ENCODE measurements at regions of chr16 and their contacts with region 1.

Region 1: GRCh38 chr16:27318392-27319226 is 4.8 kb downstream of the IL4R start:
- DNase-seq: peak; percentile 79
- H3K4me3 Mint-ChIP-seq: peak overlapping the region; percentile 94
- H3K27ac Mint-ChIP-seq: peak overlapping the region; percentile 96
- H3K4me1 Mint-ChIP-seq: peaks cover 76% of the 10 kb centered on the region
- H3K27me3 Mint-ChIP-seq: no peaks in the 10 kb centered on the region

Region 2: DNA sequence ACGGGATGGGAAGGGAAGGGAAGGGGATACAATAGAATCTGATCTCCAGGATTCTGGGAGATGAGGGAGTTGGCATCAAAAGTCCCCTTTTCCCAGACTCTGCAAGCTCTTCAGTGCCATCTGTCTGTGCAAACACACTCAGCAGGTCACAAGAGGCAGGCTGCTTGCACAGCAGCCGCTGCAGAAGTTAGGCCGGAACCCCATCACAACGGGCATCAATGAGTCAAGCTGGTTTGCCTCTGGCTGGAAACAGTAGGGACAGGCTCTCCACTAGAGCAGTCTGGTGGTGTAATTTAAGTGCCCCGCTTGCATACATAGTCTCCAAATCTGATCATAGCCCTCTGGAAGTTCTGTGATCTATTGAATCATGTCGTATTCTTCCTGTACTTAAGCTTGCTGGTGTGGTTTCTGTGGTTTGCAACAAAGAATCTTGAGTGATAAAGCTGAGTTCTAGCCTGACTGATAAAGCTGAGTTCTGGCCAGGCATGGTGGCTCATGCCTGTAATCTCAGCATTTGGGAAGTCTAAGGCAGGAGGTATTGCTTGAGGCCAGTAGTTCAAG is 149.0 kb before region 1 on chr16:
- CTCF ChIA-PET with region 1: no interaction called
- POLR2A ChIA-PET with region 1: interaction called, 9 read pairs
- intact Hi-C with region 1: loop called (anchors 2 kb)
- DNase-seq: peak; percentile 90
- H3K4me3 Mint-ChIP-seq: peak overlapping the region; percentile 9
- H3K27ac Mint-ChIP-seq: peak overlapping the region; percentile 79
- H3K4me1 Mint-ChIP-seq: peaks cover 57% of the 10 kb centered on the region
- H3K27me3 Mint-ChIP-seq: no peaks in the 10 kb centered on the region

Region 3: GRCh38 chr16:27242868-27243590 is 75.6 kb before region 1 on chr16:
- CTCF ChIA-PET with region 1: interaction called, 3 read pairs
- POLR2A ChIA-PET with region 1: interaction called, 123 read pairs
- intact Hi-C with region 1: loop called (anchors 1 kb)
- DNase-seq: peak; percentile 23
- H3K4me3 Mint-ChIP-seq: no peak overlapping the region
- H3K27ac Mint-ChIP-seq: no peak overlapping the region
- H3K4me1 Mint-ChIP-seq: peaks cover 80% of the 10 kb centered on the region
- H3K27me3 Mint-ChIP-seq: no peaks in the 10 kb centered on the region

Region 4: DNA sequence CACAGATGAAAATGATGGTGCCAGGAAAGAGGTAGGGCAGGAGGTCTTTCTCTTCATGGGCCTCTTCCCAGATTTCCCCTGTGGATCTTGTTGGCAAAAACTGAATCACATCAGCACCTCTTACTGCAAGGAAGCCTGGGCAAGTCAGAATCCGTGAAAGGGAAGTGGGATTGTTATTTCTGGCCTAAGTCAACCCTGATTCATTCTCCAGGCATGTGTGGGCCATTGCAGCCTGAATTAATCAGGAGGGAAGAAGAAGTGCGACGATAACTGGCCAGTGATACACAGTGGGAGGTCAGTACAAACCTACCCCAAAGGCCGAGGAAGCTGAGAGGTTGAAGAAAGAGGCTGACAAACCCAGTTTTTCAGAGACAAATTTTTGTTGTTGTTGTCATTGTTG is 32.2 kb before region 1 on chr16:
- CTCF ChIA-PET with region 1: no interaction called
- POLR2A ChIA-PET with region 1: interaction called, 10 read pairs
- intact Hi-C with region 1: loop called (anchors 1 kb)
- DNase-seq: peak; percentile 4
- H3K4me3 Mint-ChIP-seq: no peak overlapping the region
- H3K27ac Mint-ChIP-seq: no peak overlapping the region
- H3K4me1 Mint-ChIP-seq: peaks cover 74% of the 10 kb centered on the region
- H3K27me3 Mint-ChIP-seq: peaks cover 3% of the 10 kb centered on the region

Region 5: DNA sequence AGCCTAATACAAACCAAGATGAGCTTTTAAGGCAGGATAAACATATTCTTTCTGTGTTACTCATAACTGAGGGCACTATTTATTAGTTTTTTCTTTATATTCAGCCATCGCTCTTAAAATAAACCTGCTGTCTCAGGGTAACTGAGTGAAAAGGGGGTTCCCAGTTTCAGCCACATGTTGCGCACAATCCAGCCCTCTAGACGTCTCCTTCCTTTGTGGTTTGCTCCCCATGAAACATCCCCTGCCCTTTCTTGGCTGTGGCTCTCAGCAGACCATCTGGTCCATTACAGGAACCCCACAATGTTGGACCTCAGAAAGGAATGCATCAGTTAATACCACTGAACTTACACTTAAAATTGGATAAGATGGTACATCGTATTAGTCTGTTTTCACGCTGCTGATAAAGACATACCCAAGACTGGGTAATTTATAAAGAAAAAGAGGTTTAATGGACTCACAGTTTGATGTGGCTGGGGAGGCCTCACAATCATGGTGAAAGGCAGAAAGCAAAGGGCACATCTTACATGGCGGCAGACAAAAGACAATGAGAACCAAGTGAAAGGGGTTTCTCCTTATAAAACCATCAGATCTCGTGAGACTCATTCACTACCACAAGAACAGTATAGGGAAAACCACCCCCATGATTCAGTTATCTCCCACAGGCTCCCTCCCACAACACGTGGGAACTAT is 70.8 kb after region 1 on chr16:
- CTCF ChIA-PET with region 1: no interaction called
- POLR2A ChIA-PET with region 1: no interaction called
- intact Hi-C with region 1: no loop called
- DNase-seq: no peak
- H3K4me3 Mint-ChIP-seq: no peak overlapping the region
- H3K27ac Mint-ChIP-seq: no peak overlapping the region
- H3K4me1 Mint-ChIP-seq: peaks cover 19% of the 10 kb centered on the region
- H3K27me3 Mint-ChIP-seq: no peaks in the 10 kb centered on the region

Region 6: GRCh38 chr16:27401768-27402568 is 83.4 kb after region 1 on chr16 and contains the start of gene IL21R:
- CTCF ChIA-PET with region 1: no interaction called
- POLR2A ChIA-PET with region 1: interaction called, 35 read pairs
- intact Hi-C with region 1: loop called (anchors 2 kb)
- DNase-seq: peak; percentile 93
- H3K4me3 Mint-ChIP-seq: peak within 1 kb of the TSS; percentile 100
- H3K27ac Mint-ChIP-seq: peak within 1 kb of the TSS; percentile 96
- H3K4me1 Mint-ChIP-seq: peaks cover 43% of the 10 kb centered on the region
- H3K27me3 Mint-ChIP-seq: no peaks in the 10 kb centered on the region
- total RNA-seq, gene IL21R: 55.0 to 55.9 TPM

Measured in activated CD4-positive, alpha-beta memory T cell treated with anti-CD3 and anti-CD28 coated beads for 36 hours (primary cell).